CD8-positive, alpha-beta T cell (primary cell): ENCODE measurements at regions of chr1 and their contacts with region 1.

Region 1: DNA sequence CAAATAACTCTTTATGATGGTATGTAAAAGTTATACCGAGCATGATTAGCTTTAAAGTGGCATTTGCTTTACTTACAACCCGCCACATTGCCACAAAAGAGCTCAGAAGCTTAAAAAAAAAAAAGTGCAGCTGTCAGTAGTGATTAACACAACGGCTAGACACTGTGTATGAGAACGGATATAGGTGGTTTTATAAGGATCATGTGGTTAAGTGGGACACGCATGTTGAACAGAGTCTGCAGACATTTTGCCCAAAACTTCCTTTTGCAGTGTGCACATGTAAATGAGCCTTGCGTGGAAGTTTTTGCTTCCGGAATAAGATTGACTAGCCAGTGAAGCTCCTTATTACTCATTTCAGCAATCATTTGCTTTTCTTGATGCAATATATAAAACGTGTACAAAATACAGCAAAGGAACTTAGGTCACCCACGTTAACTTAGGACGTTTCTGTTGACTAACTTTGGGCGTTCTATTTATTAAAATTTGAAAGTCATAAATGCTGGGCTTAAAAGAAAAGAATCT is 58.7 kb upstream of the RGS1 start:
- DNase-seq: peak; percentile 18 to 96 (median 55)
- ATAC-seq: peak; percentile 93
- H3K4me3 ChIP-seq: peak overlapping the region; percentile 15
- H3K4me3 Mint-ChIP-seq: peak overlapping the region; percentile 65
- H3K27ac ChIP-seq: peak overlapping the region; percentile 6 to 62
- H3K27ac Mint-ChIP-seq: peak overlapping the region; percentile 92
- H3K4me1 ChIP-seq: peaks cover 25% of the 10 kb centered on the region
- H3K4me1 Mint-ChIP-seq: peaks cover 50% of the 10 kb centered on the region
- H3K27me3 ChIP-seq: no peaks in the 10 kb centered on the region
- H3K27me3 Mint-ChIP-seq: no peaks in the 10 kb centered on the region
- CTCF ChIP-seq: no peak

Region 2: GRCh38 chr1:192477630-192478029 is 39.2 kb before region 1 on chr1:
- CTCF ChIA-PET with region 1: interaction called, 10 read pairs
- POLR2A ChIA-PET with region 1: no interaction called
- intact Hi-C with region 1: loop called (anchors 5 kb)
- DNase-seq: peak in 2 of 9 experiments; percentile 52 to 65
- ATAC-seq: peak; percentile 77
- H3K4me3 ChIP-seq: no peak overlapping the region
- H3K4me3 Mint-ChIP-seq: no peak overlapping the region
- H3K27ac ChIP-seq: no peak overlapping the region
- H3K27ac Mint-ChIP-seq: no peak overlapping the region
- H3K4me1 ChIP-seq: no peaks in the 10 kb centered on the region
- H3K4me1 Mint-ChIP-seq: no peaks in the 10 kb centered on the region
- H3K27me3 ChIP-seq: peaks cover 0 to 2% of the 10 kb centered on the region in 2 experiments
- H3K27me3 Mint-ChIP-seq: no peaks in the 10 kb centered on the region
- CTCF ChIP-seq: peak; percentile 64

Region 3: DNA sequence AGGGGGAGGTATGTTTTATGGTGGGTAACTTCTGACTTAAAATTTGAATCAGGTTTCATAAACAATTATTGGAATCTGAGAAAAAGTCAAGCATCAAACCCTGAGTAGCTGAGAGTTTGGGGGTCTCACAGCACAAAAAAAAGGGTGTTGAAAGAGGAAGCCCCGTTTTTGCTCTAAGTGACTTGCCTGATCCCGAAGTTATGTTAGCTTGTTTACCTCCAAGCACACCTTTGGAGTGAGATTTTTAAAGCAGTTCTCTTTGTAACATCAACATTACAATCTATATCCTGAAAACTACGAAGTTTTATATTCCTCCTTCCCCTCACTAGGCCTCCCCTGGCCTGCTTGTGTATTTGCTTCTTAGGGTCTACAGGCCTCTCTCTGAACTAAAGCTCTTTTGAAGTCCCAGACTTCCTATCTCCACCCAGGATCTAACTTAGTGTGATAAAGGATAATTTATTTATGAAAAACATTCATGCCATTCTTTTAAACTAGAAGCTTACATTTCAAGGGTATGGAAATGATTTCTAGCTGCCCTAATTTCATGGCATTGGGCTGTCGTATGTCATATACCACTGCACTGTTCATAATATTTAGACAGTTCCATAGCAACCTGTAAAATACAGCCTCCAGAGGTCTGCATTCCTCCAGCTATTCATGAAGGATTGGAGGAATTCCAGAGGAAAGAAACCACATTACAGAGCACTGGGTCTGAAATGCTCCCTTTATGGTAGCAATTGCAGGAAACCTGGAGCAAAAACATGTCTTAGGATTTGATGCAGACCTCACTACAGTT is 22.7 kb after region 1 on chr1:
- CTCF ChIA-PET with region 1: interaction called, 6 read pairs
- POLR2A ChIA-PET with region 1: no interaction called
- intact Hi-C with region 1: loop called (anchors 2 kb)
- DNase-seq: peak in 1 of 9 experiments; percentile 46
- ATAC-seq: peak; percentile 28
- H3K4me3 ChIP-seq: no peak overlapping the region
- H3K4me3 Mint-ChIP-seq: peak overlapping the region; percentile 3
- H3K27ac ChIP-seq: peak overlapping the region; percentile 18 to 19
- H3K27ac Mint-ChIP-seq: peak overlapping the region; percentile 88
- H3K4me1 ChIP-seq: peaks cover 13% of the 10 kb centered on the region
- H3K4me1 Mint-ChIP-seq: peaks cover 28% of the 10 kb centered on the region
- H3K27me3 ChIP-seq: no peaks in the 10 kb centered on the region
- H3K27me3 Mint-ChIP-seq: no peaks in the 10 kb centered on the region
- CTCF ChIP-seq: no peak

Region 4: GRCh38 chr1:192550922-192551534 is 34.2 kb after region 1 on chr1:
- CTCF ChIA-PET with region 1: no interaction called
- POLR2A ChIA-PET with region 1: interaction called, 4 read pairs
- intact Hi-C with region 1: loop called in 1 of 2 experiments (anchors 5 kb)
- DNase-seq: peak in 2 of 9 experiments; percentile 28 to 50
- ATAC-seq: peak; percentile 74
- H3K4me3 ChIP-seq: no peak overlapping the region
- H3K4me3 Mint-ChIP-seq: no peak overlapping the region
- H3K27ac ChIP-seq: peak overlapping the region in 1 of 2 experiments; percentile 7
- H3K27ac Mint-ChIP-seq: peak overlapping the region; percentile 20
- H3K4me1 ChIP-seq: peaks cover 6% of the 10 kb centered on the region
- H3K4me1 Mint-ChIP-seq: peaks cover 25% of the 10 kb centered on the region
- H3K27me3 ChIP-seq: no peaks in the 10 kb centered on the region
- H3K27me3 Mint-ChIP-seq: peaks cover 2% of the 10 kb centered on the region
- CTCF ChIP-seq: no peak

Region 5: GRCh38 chr1:193121616-193122593 is 605.1 kb after region 1 on chr1 and contains the start of gene CDC73:
- CTCF ChIA-PET with region 1: no interaction called
- POLR2A ChIA-PET with region 1: no interaction called
- intact Hi-C with region 1: loop called in 1 of 2 experiments (anchors 5 kb)
- DNase-seq: peak; percentile 98 to 100 (median 99)
- ATAC-seq: peak; percentile 92
- H3K4me3 ChIP-seq: peak within 1 kb of the TSS; percentile 89 to 98
- H3K4me3 Mint-ChIP-seq: peak within 1 kb of the TSS; percentile 100
- H3K27ac ChIP-seq: peak within 1 kb of the TSS; percentile 94 to 96
- H3K27ac Mint-ChIP-seq: peak within 1 kb of the TSS; percentile 100
- H3K4me1 ChIP-seq: peaks cover 33% of the 10 kb centered on the region
- H3K4me1 Mint-ChIP-seq: peaks cover 55% of the 10 kb centered on the region
- H3K27me3 ChIP-seq: no peaks in the 10 kb centered on the region
- H3K27me3 Mint-ChIP-seq: no peaks in the 10 kb centered on the region
- CTCF ChIP-seq: peak; percentile 84
- total RNA-seq, gene CDC73: 73.9 to 78.8 TPM

Region 6: DNA sequence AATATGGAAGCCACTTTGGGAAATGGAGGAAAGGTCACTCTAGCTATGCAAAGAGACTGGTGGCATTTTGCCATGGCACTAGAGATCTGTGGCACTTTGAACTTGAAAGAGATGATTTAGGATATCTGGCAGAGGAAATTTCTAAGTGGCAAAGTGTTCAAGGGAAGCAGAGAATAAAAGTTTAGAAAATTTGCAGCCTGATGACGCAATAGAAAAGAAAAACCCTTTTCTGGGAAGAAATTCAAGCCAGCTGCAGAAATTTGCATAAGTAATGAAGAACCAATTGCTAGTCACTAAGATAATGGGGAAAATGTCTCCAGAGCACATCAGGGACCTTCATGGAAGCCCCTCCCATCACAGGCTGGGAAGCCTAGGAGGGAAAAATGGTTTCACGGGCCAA is 860.6 kb after region 1 on chr1:
- CTCF ChIA-PET with region 1: no interaction called
- POLR2A ChIA-PET with region 1: no interaction called
- intact Hi-C with region 1: no loop called
- DNase-seq: no peak
- ATAC-seq: no peak
- H3K4me3 ChIP-seq: no peak overlapping the region
- H3K4me3 Mint-ChIP-seq: no peak overlapping the region
- H3K27ac ChIP-seq: no peak overlapping the region
- H3K27ac Mint-ChIP-seq: no peak overlapping the region
- H3K4me1 ChIP-seq: no peaks in the 10 kb centered on the region
- H3K4me1 Mint-ChIP-seq: no peaks in the 10 kb centered on the region
- H3K27me3 ChIP-seq: no peaks in the 10 kb centered on the region
- H3K27me3 Mint-ChIP-seq: no peaks in the 10 kb centered on the region
- CTCF ChIP-seq: no peak